CD4-positive, alpha-beta memory T cell (primary cell): ENCODE measurements at regions of chr4 and their contacts with region 1.

Region 1: DNA sequence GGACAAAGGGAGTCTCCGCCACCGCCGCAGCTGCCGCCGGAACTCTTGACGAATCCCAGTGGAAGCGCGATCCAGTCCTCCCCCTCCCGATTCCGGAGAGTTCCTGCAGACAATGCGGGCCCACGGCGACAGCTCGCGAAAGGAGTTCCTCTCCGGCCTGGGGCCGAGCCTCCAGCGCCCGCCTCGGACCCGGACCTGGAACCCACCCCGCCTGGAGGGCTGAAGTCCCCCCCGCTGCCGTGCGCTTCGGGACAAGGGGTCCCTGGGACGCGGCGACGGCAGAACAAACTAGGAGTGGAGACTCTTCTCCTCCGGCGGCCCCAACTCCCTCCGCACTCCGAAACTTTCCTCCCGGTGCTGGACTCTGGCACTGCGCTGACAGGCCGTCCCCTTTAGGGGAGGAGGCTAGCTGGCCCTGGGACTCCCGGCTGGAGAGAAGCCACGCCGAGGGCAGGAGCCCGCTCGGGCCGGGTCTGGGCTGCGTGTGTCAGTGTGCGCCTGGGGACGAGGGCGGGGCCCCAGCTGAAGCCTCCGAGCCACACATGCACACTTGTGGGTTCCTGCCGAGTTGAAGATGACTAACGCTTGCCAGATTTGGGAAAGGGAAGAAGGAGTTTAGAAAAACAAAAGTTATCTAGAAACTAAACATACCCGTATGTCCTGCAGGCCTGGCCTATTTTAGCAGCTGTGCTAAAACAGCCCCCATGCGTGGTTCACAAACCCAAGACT is at the start of gene ANTXR2:
- DNase-seq: peak; percentile 64 to 86 (median 68)
- H3K4me3 ChIP-seq: peak within 1 kb of the TSS; percentile 68 to 75
- H3K4me3 Mint-ChIP-seq: peak within 1 kb of the TSS; percentile 97 to 99 (median 98)
- H3K27ac ChIP-seq: peak within 1 kb of the TSS; percentile 86
- H3K27ac Mint-ChIP-seq: peak within 1 kb of the TSS; percentile 97 to 99 (median 98)
- H3K4me1 ChIP-seq: peaks cover 74% of the 10 kb centered on the region
- H3K4me1 Mint-ChIP-seq: peaks cover 47 to 86% (median 59%) of the 10 kb centered on the region in 4 donors
- H3K27me3 ChIP-seq: no peaks in the 10 kb centered on the region
- H3K27me3 Mint-ChIP-seq: no peaks in the 10 kb centered on the region
- total RNA-seq, gene ANTXR2: 90.1 to 91.6 TPM

Region 2: DNA sequence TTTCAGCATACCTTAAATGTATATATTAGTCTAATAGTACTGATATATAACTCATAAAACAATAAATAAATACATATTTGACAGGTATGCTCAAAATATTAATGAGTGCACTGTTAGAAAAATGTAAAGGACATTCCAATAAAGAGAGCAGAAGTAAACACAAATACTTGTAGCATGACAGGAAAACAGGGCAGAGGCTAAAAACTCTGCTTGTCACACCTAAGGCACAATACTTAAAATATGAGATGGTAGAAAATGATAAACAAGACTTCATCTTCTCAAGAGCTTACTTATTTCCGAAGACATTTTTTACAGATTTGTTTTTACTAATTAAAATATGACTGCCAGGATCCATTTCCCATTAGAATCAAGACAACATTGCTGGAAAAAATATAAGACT is 360.2 kb before region 1 on chr4:
- CTCF ChIA-PET with region 1: no interaction called
- POLR2A ChIA-PET with region 1: no interaction called
- intact Hi-C with region 1: no loop called
- DNase-seq: no peak
- H3K4me3 ChIP-seq: no peak overlapping the region
- H3K4me3 Mint-ChIP-seq: no peak overlapping the region
- H3K27ac ChIP-seq: no peak overlapping the region
- H3K27ac Mint-ChIP-seq: no peak overlapping the region
- H3K4me1 ChIP-seq: no peaks in the 10 kb centered on the region
- H3K4me1 Mint-ChIP-seq: no peaks in the 10 kb centered on the region
- H3K27me3 ChIP-seq: no peaks in the 10 kb centered on the region
- H3K27me3 Mint-ChIP-seq: peaks cover 0 to 5% of the 10 kb centered on the region in 2 donors

Region 3: DNA sequence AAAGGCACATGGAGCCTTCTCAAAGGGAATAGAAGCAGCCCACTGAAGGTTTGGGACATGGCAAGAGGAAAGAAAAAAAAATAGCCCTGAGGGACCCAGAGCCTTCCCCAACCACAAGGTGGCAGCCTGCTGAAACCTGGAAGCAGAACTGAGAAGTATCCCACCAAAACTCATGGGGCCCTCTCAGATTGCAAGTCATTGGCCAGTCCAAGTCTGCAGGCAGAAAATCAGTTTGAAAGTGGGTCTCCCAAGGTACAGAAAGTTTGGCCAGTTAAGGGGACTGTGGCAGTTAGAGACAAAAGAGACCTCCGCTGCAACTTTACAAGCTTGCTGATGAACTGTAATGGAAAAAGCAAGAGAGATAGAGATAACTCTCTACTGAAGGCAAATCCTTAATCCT is 155.7 kb before region 1 on chr4:
- CTCF ChIA-PET with region 1: interaction called, 3 read pairs
- POLR2A ChIA-PET with region 1: interaction called, 4 read pairs
- intact Hi-C with region 1: loop called (anchors 2 kb)
- DNase-seq: peak; percentile 31 to 35 (median 32)
- H3K4me3 ChIP-seq: no peak overlapping the region
- H3K4me3 Mint-ChIP-seq: no peak overlapping the region
- H3K27ac ChIP-seq: no peak overlapping the region
- H3K27ac Mint-ChIP-seq: peak overlapping the region in 1 of 7 donors; percentile 71
- H3K4me1 ChIP-seq: peaks cover 11% of the 10 kb centered on the region
- H3K4me1 Mint-ChIP-seq: peaks cover 5 to 26% (median 13%) of the 10 kb centered on the region in 4 donors
- H3K27me3 ChIP-seq: no peaks in the 10 kb centered on the region
- H3K27me3 Mint-ChIP-seq: no peaks in the 10 kb centered on the region

Region 4: DNA sequence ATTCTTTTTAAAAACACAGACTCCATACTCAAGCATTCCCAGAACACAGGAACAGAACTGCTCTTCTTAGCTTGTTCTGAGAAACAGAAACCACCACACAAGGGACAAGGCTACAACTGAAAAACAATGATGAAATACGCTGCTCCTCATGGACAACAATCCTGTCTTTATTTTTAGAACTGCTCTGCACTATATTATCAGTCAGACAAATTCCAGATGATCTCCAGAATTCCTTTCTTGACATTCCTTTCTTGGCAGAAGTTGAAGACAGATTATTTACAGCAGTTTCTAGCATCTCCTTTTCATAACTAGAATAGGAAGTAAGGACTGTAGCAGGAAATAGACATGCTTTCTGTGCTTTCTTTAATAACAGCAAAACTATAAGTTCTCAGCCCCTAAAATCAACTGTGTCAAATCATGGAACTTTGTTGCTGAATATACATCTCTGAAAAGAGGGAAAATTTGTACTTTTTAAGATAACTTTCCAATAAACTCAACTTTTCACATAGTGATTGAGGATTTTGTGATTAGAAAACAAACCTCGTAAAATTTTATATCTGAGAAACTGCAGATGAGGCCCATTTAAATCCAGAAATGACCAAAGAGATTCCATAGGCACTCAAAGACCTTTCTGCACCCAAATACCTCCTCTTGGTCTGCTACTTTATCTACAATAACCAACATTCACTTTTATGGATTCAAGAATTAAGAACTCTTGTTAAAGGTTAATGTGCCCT is 35.8 kb before region 1 on chr4:
- CTCF ChIA-PET with region 1: interaction called, 4 read pairs
- POLR2A ChIA-PET with region 1: interaction called, 12 read pairs
- intact Hi-C with region 1: no loop called
- DNase-seq: no peak
- H3K4me3 ChIP-seq: no peak overlapping the region
- H3K4me3 Mint-ChIP-seq: peak overlapping the region; percentile 62 to 91 (median 78)
- H3K27ac ChIP-seq: peak overlapping the region; percentile 42
- H3K27ac Mint-ChIP-seq: peak overlapping the region; percentile 84 to 96 (median 91)
- H3K4me1 ChIP-seq: peaks cover 47% of the 10 kb centered on the region
- H3K4me1 Mint-ChIP-seq: peaks cover 29 to 66% (median 41%) of the 10 kb centered on the region in 4 donors
- H3K27me3 ChIP-seq: no peaks in the 10 kb centered on the region
- H3K27me3 Mint-ChIP-seq: no peaks in the 10 kb centered on the region

Region 5: GRCh38 chr4:80173401-80173800 is 100.5 kb after region 1 on chr4:
- CTCF ChIA-PET with region 1: interaction called, 5 read pairs
- POLR2A ChIA-PET with region 1: interaction called, 40 read pairs
- intact Hi-C with region 1: no loop called
- DNase-seq: peak; percentile 63 to 85 (median 72)
- H3K4me3 ChIP-seq: no peak overlapping the region
- H3K4me3 Mint-ChIP-seq: peak overlapping the region; percentile 43 to 82 (median 76)
- H3K27ac ChIP-seq: peak overlapping the region; percentile 71
- H3K27ac Mint-ChIP-seq: peak overlapping the region; percentile 93 to 96 (median 95)
- H3K4me1 ChIP-seq: peaks cover 67% of the 10 kb centered on the region
- H3K4me1 Mint-ChIP-seq: peaks cover 55 to 78% (median 67%) of the 10 kb centered on the region in 4 donors
- H3K27me3 ChIP-seq: no peaks in the 10 kb centered on the region
- H3K27me3 Mint-ChIP-seq: no peaks in the 10 kb centered on the region

Region 6: DNA sequence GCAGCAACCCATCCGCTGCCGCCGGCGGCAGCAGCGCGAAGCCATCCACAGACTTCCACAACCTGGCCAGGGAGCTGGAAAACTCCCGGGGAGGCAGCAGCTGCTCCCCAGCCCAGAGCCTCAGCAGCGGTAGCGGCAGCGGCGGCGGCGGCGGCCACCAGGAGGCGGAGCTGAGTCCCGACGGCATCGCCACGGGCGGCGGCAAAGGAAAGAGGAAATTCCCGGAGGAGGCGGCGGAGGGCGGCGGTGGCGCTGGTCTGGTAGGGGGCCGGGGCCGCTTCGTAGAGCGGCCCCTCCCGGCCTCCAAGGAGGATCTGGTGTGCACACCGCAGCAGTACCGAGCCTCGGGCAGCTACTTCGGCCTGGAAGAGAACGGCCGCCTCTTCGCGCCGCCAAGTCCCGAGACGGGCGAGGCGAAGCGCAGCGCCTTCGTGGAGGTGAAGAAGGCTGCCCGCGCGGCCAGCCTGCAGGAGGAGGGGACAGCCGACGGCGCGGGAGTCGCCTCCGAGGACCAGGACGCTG is 129.3 kb after region 1 on chr4:
- CTCF ChIA-PET with region 1: interaction called, 18 read pairs
- POLR2A ChIA-PET with region 1: interaction called, 47 read pairs
- intact Hi-C with region 1: loop called (anchors 1 kb)
- DNase-seq: peak; percentile 72 to 81 (median 77)
- H3K4me3 ChIP-seq: peak overlapping the region; percentile 23 to 77
- H3K4me3 Mint-ChIP-seq: peak overlapping the region; percentile 82 to 94 (median 88)
- H3K27ac ChIP-seq: peak overlapping the region; percentile 82
- H3K27ac Mint-ChIP-seq: peak overlapping the region; percentile 89 to 93 (median 91)
- H3K4me1 ChIP-seq: peaks cover 17% of the 10 kb centered on the region
- H3K4me1 Mint-ChIP-seq: peaks cover 23 to 34% (median 27%) of the 10 kb centered on the region in 4 donors
- H3K27me3 ChIP-seq: no peaks in the 10 kb centered on the region
- H3K27me3 Mint-ChIP-seq: no peaks in the 10 kb centered on the region